ENCODE measurements at regions of chr2 and their contacts with region 1.

Region 1: DNA sequence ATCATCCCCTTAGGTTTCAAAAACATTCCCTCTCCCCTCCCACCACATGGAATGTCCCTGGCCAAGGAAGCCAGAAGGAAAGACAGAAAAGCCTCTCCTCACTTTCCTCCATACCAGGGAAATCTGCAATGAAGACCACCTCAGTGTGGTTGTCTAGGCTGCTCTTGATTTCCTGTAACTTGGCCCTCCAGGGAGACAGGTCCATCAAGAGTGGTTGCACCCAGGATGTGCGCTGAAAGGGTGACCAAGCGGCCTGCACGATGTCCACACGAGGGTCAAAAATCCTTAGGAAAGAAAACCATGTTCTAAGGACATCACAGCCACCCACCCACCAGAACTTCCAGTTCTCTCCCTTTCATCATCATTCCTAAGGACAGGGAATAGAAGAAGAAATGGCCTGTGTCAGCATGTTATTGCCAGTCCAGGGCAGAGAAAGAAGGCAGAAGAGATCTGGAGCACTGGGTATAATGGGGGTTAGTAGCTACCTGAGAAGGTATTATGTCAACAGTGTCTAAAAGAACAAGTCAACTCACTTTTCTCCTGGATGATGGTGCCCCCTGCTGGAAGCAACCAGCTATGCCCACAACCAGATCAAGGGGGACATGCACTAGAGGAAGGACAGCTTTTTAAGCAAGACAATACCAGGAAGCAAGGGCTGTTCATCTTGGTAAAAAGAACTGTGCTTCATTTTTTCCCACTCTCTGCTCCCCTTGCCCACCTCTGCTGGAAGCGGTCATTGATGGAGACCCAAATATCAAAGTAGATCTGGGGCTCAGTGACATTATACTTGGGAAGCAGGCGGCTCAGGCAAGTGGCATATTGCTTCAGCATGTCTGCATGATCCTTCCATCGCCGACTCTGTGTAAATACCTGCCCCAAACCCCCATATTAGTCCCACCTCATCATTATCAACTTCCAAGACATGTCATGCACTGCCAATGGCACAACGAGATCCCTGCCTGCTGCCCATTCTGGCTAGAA is 9.3 kb downstream of the GGCX start:
- DNase-seq: peak; percentile 83 to 94 (median 88)
- ATAC-seq: peak; percentile 100
- H3K4me3 ChIP-seq: no peak overlapping the region
- H3K4me3 Mint-ChIP-seq: no peak overlapping the region
- H3K27ac ChIP-seq: no peak overlapping the region
- H3K27ac Mint-ChIP-seq: no peak overlapping the region
- H3K4me1 ChIP-seq: no peaks in the 10 kb centered on the region
- H3K4me1 Mint-ChIP-seq: peaks cover 4% of the 10 kb centered on the region
- H3K27me3 ChIP-seq: no peaks in the 10 kb centered on the region
- H3K27me3 Mint-ChIP-seq: no peaks in the 10 kb centered on the region
- CTCF ChIP-seq: peak; percentile 87

Region 2: DNA sequence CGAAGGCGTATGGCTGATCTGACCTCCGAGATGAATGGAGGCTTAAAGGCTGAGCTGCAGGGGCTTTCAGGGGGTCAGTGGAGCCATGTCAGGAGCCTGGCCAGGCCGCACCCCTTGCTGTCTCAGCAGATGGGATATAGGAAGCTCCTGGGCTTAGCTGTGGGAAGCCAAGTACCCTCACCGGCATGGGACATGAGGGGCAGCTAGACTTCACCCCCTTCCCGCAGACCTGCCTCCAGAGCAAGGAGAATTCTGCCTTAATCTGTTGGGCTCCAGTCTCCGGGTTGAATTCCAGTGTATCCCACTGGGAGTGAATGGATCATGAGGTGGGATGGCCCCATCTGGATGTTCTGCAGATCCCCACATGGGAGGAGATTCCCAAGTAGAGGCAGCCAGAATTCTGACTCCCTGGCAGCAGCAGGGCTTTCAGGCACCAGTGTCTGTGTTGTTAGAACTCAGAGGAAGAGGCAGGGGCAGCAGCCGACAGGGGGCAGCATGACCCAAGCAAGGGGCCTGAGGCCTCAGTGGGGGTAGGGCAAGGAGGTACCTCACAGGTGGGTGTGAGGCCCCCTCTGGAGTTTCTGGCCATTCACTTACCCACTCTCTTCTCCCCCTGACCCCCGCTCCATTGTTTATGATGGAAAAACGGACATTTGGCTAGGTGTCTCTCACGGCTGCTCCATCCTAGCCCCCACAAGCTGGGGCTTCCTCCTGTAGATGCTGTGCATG is 160.9 kb before region 1 on chr2:
- CTCF ChIA-PET with region 1: interaction called, 70 read pairs
- POLR2A ChIA-PET with region 1: interaction called, 3 read pairs
- intact Hi-C with region 1: loop called (anchors 1 kb)
- DNase-seq: peak; percentile 59 to 86 (median 72)
- ATAC-seq: peak; percentile 81
- H3K4me3 ChIP-seq: no peak overlapping the region
- H3K4me3 Mint-ChIP-seq: no peak overlapping the region
- H3K27ac ChIP-seq: no peak overlapping the region
- H3K27ac Mint-ChIP-seq: no peak overlapping the region
- H3K4me1 ChIP-seq: peaks cover 9% of the 10 kb centered on the region
- H3K4me1 Mint-ChIP-seq: peaks cover 4% of the 10 kb centered on the region
- H3K27me3 ChIP-seq: no peaks in the 10 kb centered on the region
- H3K27me3 Mint-ChIP-seq: no peaks in the 10 kb centered on the region
- CTCF ChIP-seq: peak; percentile 49

Region 3: GRCh38 chr2:85413592-85414421 is 138.2 kb before region 1 on chr2:
- CTCF ChIA-PET with region 1: interaction called, 355 read pairs
- POLR2A ChIA-PET with region 1: interaction called, 39 read pairs
- intact Hi-C with region 1: no loop called
- DNase-seq: peak in 6 of 9 experiments; percentile 33 to 67 (median 50)
- ATAC-seq: peak; percentile 29
- H3K4me3 ChIP-seq: peak overlapping the region; percentile 25 to 29
- H3K4me3 Mint-ChIP-seq: peak overlapping the region; percentile 81
- H3K27ac ChIP-seq: no peak overlapping the region
- H3K27ac Mint-ChIP-seq: no peak overlapping the region
- H3K4me1 ChIP-seq: peaks cover 35% of the 10 kb centered on the region
- H3K4me1 Mint-ChIP-seq: peaks cover 29% of the 10 kb centered on the region
- H3K27me3 ChIP-seq: peaks cover 0 to 7% of the 10 kb centered on the region in 2 experiments
- H3K27me3 Mint-ChIP-seq: peaks cover 9% of the 10 kb centered on the region
- CTCF ChIP-seq: no peak

Region 4: GRCh38 chr2:85694052-85695025 is 142.4 kb after region 1 on chr2 and contains the start of gene GNLY:
- CTCF ChIA-PET with region 1: no interaction called
- POLR2A ChIA-PET with region 1: no interaction called
- intact Hi-C with region 1: no loop called
- DNase-seq: peak in 5 of 9 experiments; percentile 19 to 73 (median 48)
- ATAC-seq: peak; percentile 61
- H3K4me3 ChIP-seq: peak within 1 kb of the TSS; percentile 8 to 71
- H3K4me3 Mint-ChIP-seq: peak within 1 kb of the TSS; percentile 65
- H3K27ac ChIP-seq: peak within 1 kb of the TSS; percentile 50 to 76
- H3K27ac Mint-ChIP-seq: peak within 1 kb of the TSS; percentile 82
- H3K4me1 ChIP-seq: no peaks in the 10 kb centered on the region
- H3K4me1 Mint-ChIP-seq: peaks cover 2% of the 10 kb centered on the region
- H3K27me3 ChIP-seq: no peaks in the 10 kb centered on the region
- H3K27me3 Mint-ChIP-seq: peaks cover under 1% of the 10 kb centered on the region
- CTCF ChIP-seq: no peak
- total RNA-seq, gene GNLY: 90.8 to 92.9 TPM

Measured in CD8-positive, alpha-beta T cell (primary cell).